Heart left ventricle (tissue), 16 donors: ENCODE measurements at regions of chr7 and their contacts with region 1.

Region 1: GRCh38 chr7:48681006-48681405 is 243.3 kb upstream of the CDC14C start:
- DNase-seq: no peak
- ATAC-seq: no peak
- H3K4me3 ChIP-seq: no peak overlapping the region
- H3K27ac ChIP-seq: no peak overlapping the region
- H3K4me1 ChIP-seq: no peaks in the 10 kb centered on the region
- H3K27me3 ChIP-seq: no peaks in the 10 kb centered on the region
- CTCF ChIP-seq: no peak
- POLR2A ChIP-seq: no peak

Region 2: DNA sequence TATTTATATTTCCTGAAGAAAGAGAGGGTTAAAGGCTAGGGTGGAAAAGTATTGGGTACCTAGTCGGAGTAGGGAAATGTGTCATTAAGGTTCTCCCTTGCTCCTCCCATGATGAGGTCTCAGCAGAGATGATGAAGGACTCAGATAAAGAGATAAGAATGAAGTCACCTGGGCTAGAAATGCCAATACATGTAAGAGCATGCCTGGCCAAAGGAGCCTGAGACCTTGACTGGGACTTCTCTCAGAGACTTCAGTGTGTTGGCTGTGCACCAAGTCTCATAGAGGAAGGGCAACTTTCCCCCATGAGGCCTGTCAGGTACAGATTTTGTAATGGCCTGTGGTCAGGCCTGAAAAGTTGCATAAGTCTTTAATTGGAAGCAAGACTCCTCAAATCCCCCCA is 117.7 kb before region 1 on chr7:
- intact Hi-C with region 1: no loop called
- DNase-seq: no peak
- ATAC-seq: no peak
- H3K4me3 ChIP-seq: no peak overlapping the region
- H3K27ac ChIP-seq: no peak overlapping the region
- H3K4me1 ChIP-seq: no peaks in the 10 kb centered on the region
- H3K27me3 ChIP-seq: no peaks in the 10 kb centered on the region
- CTCF ChIP-seq: no peak
- POLR2A ChIP-seq: no peak

Region 3: DNA sequence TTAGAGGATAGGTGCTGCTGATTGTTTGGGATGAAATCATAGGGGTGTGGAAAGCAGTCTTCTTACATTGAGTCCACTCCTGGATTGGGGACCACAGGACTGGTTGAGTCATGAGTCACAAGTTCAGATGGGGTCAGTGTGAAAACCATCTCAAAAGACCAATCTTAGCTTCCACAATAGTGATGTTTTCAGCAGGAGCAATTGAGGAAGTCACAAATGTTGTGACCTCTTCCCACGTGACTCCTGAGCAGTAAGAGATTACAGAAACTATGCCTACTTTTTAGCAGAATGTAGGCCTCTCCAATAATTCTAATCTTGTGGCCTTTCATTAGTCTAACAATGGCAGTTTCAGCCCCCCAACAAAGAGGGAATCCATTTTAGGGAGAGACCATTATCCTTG is 13.6 kb before region 1 on chr7:
- intact Hi-C with region 1: loop called in 1 of 10 experiments (anchors 2 kb)
- DNase-seq: no peak
- ATAC-seq: no peak
- H3K4me3 ChIP-seq: no peak overlapping the region
- H3K27ac ChIP-seq: no peak overlapping the region
- H3K4me1 ChIP-seq: no peaks in the 10 kb centered on the region
- H3K27me3 ChIP-seq: no peaks in the 10 kb centered on the region
- CTCF ChIP-seq: no peak
- POLR2A ChIP-seq: no peak

Region 4: DNA sequence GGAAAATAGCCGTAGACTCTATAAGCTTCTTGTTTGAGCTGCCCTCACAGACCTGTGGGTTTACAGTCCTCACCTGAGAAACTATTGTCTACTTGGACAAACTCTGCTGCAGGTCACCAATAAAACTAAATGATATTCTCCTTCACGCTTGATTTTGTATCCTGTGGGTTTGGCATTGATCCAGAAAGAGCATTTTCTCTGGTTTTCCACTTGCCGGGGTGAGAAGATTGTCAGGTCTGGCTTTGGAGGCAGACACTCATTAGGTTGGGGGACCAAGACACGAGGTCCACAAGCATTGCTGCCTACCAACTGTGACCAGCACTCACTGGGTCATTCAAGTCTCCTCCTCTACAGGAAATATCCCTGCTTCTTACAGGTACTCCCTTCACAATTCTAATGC is 311.8 kb after region 1 on chr7:
- intact Hi-C with region 1: no loop called
- DNase-seq: no peak
- ATAC-seq: no peak
- H3K4me3 ChIP-seq: no peak overlapping the region
- H3K27ac ChIP-seq: no peak overlapping the region
- H3K4me1 ChIP-seq: no peaks in the 10 kb centered on the region
- H3K27me3 ChIP-seq: no peaks in the 10 kb centered on the region
- CTCF ChIP-seq: no peak
- POLR2A ChIP-seq: no peak